ENCODE measurements at regions of chr3 and their contacts with region 1.

Region 1: DNA sequence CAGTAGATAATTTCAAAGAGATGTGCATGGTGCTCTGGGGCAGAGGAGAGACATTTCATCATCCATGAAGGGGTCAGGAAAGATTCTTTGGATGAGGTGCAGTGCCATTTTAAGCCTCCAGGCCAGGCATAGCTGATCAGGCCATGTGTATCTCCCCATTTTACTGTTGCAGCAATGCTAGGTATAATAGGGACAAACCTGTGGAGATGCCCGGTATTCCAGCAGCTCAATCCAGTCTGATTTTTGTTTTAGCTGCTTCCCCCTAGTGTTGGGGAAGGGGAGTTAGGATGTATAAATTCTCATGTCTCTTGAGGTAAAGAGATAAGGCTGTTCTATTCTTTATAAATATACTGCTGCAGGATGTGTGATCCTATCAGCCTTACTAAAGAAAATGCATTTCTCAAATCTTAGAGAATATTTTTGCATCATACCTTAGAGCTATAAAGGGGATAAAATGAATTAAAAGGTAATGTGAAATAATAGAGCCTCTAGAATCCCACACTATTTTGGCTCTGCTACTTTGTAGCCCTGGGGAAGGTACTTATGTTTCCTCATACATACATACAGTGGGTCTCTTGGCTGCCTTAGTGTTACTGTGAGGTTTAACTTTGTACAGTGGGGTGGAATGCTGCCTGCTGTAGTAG is 5.2 kb downstream of the CDV3 start:
- DNase-seq: peak; percentile 64 to 75
- ATAC-seq: peak; percentile 72 to 87
- H3K4me3 ChIP-seq: no peak overlapping the region
- H3K27ac ChIP-seq: 0 out of 6 replicates have a peak overlapping the region, but pooled peaks of 1 of the 2 experiments have one; percentile 7
- H3K4me1 ChIP-seq: peaks cover 26% of the 10 kb centered on the region
- CTCF ChIP-seq: peak; percentile 60
- EP300 ChIP-seq: no peak
- POLR2A ChIP-seq: no peak
- RAD21 ChIP-seq: peak; percentile 56 to 65

Region 2: GRCh38 chr3:133464573-133464972 is 114.1 kb before region 1 on chr3:
- CTCF ChIA-PET with region 1: interaction called, 15 read pairs
- POLR2A ChIA-PET with region 1: interaction called, 9 read pairs
- DNase-seq: peak in 1 of 2 experiments; percentile 24
- ATAC-seq: peak; percentile 66 to 78; a peak in 5 of 6 replicates
- H3K4me3 ChIP-seq: no peak overlapping the region
- H3K27ac ChIP-seq: no peak overlapping the region
- H3K4me1 ChIP-seq: peaks cover 19% of the 10 kb centered on the region
- CTCF ChIP-seq: peak; percentile 27; the same call in 1 of the 3 replicates
- EP300 ChIP-seq: no peak
- POLR2A ChIP-seq: no peak
- RAD21 ChIP-seq: peak; percentile 20 to 44; a peak in 1 of 5 replicates

Region 3: DNA sequence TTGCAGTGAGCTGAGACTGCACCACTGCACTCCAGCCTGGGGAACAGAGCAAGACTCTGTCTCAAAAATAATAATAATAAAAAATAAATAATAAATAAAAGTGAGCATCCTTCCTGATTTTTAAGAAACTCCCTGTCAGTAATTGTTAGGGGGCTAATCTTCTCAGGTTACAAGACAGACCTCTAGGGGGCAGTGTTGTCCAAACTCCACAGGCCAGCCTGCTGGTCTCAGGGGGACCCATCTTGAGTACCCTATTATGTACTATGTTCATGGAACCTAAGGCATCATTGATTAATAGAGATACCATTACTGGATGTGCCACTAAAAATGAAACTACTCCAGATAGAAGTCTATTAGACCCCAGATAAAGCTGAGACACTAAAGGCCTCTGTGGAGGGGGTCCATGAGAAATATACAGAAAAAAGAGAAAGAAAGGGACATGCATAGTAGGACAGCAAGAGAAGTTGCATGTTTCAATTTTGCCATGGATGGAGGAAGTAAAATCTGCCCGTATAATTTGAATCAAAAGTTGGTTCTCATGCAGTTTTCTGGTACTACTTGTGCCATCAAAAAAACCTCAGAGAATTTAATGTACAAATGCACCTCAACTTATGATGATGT is 90.6 kb before region 1 on chr3:
- CTCF ChIA-PET with region 1: interaction called, 10 read pairs
- POLR2A ChIA-PET with region 1: interaction called, 4 read pairs
- DNase-seq: peak; percentile 12 to 15
- ATAC-seq: 0 out of 6 replicates have a peak, but pooled peaks of 1 of the 2 experiments have one; percentile 39
- H3K4me3 ChIP-seq: no peak overlapping the region
- H3K27ac ChIP-seq: no peak overlapping the region
- H3K4me1 ChIP-seq: no peaks in the 10 kb centered on the region
- CTCF ChIP-seq: peak; percentile 31; the same call in 1 of the 3 replicates
- EP300 ChIP-seq: no peak
- POLR2A ChIP-seq: no peak
- RAD21 ChIP-seq: peak; percentile 28 to 44; a peak in 4 of 5 replicates

Region 4: GRCh38 chr3:133633439-133633838 is 54.8 kb after region 1 on chr3:
- CTCF ChIA-PET with region 1: no interaction called
- POLR2A ChIA-PET with region 1: no interaction called
- DNase-seq: no peak
- ATAC-seq: no peak
- H3K4me3 ChIP-seq: no peak overlapping the region
- H3K27ac ChIP-seq: no peak overlapping the region
- H3K4me1 ChIP-seq: peaks cover 7% of the 10 kb centered on the region; the same call in 1 of the 3 replicates
- CTCF ChIP-seq: no peak
- EP300 ChIP-seq: no peak
- POLR2A ChIP-seq: no peak
- RAD21 ChIP-seq: no peak

Region 5: DNA sequence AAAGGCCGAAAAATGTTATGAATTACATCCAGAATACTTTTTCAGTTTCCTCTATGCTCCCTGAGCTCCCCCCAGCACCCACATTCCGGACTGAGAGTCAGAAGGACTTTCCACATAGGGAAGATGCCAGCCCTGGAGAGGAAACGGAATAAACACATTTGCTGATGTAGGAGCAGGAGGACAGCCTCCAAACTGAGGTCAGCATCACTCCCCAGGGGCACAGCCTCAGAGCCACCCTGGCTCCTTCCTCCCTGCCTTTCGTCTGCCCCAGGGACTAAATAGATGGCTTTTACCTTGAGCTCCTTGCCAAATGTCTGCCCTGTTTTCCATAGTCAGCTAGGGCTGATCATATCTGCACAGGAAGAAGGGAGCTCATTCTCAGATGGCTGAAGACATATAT is 473.7 kb after region 1 on chr3:
- CTCF ChIA-PET with region 1: no interaction called
- POLR2A ChIA-PET with region 1: no interaction called
- DNase-seq: no peak
- ATAC-seq: no peak
- H3K4me3 ChIP-seq: no peak overlapping the region
- H3K27ac ChIP-seq: no peak overlapping the region
- H3K4me1 ChIP-seq: no peaks in the 10 kb centered on the region
- CTCF ChIP-seq: no peak
- EP300 ChIP-seq: no peak
- POLR2A ChIP-seq: no peak
- RAD21 ChIP-seq: no peak

Measured in A549 (cell line).